ENCODE measurements at regions of chr2 and their contacts with region 1.

Region 1: GRCh38 chr2:30711646-30712085 is 95.6 kb downstream of the CAPN13 start:
- DNase-seq: peak in 3 of 4 donors; percentile 57 to 87 (median 84)
- ATAC-seq: peak; percentile 93
- H3K4me3 ChIP-seq: no peak overlapping the region
- H3K27ac ChIP-seq: peak overlapping the region in 1 of 2 donors; percentile 67
- H3K4me1 ChIP-seq: peaks cover 3 to 28% of the 10 kb centered on the region in 2 donors
- H3K27me3 ChIP-seq: no peaks in the 10 kb centered on the region
- CTCF ChIP-seq: peak; percentile 97 to 99

Region 2: DNA sequence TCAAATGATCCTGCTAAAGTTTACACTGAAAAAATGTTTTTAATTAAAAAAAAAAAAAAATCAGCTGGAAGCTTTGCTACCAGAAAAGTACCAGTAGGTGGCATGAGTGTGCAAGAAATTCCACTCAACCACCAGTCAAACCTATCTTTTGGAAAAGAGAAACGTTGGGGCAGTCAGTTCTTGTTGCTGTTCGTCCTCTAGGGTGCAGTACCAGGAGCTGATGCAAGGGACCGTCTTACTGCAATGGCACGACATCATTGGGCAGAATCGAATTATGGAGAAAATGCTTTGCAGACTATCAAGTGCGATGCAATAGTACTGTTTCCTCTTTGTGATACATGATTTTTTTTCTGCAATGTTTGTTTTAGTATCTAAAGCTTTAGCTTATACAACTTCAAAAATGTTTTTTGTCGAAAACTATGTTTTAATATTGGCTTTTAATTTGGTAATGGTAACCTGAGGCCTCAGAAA is 546.6 kb before region 1 on chr2:
- intact Hi-C with region 1: loop called in 1 of 2 experiments (anchors 5 kb)
- DNase-seq: peak in 2 of 4 donors; percentile 61 to 82
- ATAC-seq: peak; percentile 98
- H3K4me3 ChIP-seq: no peak overlapping the region
- H3K27ac ChIP-seq: no peak overlapping the region
- H3K4me1 ChIP-seq: peaks cover 0 to 9% of the 10 kb centered on the region in 2 donors
- H3K27me3 ChIP-seq: no peaks in the 10 kb centered on the region
- CTCF ChIP-seq: peak; percentile 82 to 89

Region 3: GRCh38 chr2:30208452-30208851 is 503.2 kb before region 1 on chr2:
- intact Hi-C with region 1: loop called (anchors 5 to 10 kb)
- DNase-seq: peak in 2 of 4 donors; percentile 53 to 79
- ATAC-seq: peak; percentile 93
- H3K4me3 ChIP-seq: no peak overlapping the region
- H3K27ac ChIP-seq: no peak overlapping the region
- H3K4me1 ChIP-seq: peaks cover 4 to 14% of the 10 kb centered on the region in 2 donors
- H3K27me3 ChIP-seq: no peaks in the 10 kb centered on the region
- CTCF ChIP-seq: peak; percentile 83 to 92

Region 4: DNA sequence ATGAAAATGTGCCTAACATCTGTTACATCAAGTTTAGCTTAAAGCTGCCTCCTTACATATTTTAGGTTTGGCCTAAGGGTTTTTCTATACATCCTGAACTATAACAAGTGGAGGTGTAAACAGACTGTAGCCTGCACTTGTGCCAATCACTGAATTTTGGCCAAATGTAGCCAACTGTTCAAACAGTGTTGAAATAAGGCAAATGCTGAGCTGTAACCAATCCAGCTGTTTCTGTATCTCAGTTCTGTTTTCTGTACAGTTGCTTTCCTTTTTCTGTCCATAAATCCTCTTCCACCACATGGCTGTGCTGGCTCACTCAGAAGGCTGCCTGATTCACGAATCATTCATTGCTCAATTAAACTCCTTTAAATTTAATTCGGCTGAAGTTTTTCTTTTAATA is 114.8 kb after region 1 on chr2:
- intact Hi-C with region 1: no loop called
- DNase-seq: no peak
- ATAC-seq: no peak
- H3K4me3 ChIP-seq: no peak overlapping the region
- H3K27ac ChIP-seq: no peak overlapping the region
- H3K4me1 ChIP-seq: no peaks in the 10 kb centered on the region
- H3K27me3 ChIP-seq: no peaks in the 10 kb centered on the region
- CTCF ChIP-seq: no peak

Region 5: DNA sequence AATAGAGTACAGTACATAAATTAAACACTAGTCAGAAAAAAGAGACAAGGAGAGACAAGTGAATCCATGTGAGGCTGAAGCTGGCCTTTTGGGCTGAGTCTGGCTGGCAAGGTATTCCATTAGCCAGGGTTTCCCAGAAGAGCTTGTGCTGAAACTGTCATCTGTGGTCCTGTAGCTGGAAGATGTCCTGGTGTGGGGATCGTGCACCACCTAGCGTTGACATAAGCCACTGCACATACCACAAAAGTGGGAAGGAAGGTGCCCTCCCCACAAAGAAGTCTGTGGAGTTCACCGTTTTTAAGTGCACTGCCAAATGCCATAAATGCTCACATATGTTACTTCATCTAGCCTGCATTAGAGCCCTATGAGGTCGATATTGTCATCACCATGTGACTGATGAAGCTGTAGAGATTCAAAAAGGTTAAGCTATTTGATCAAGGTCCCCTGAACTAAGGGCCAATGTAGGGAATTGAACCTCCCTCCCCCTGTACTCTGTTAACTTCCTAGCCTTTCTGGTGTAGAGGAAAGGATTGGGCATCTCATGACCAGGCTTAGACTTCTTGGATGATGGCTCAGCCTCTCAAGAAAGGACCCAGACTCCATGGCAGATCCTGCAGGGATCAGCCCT is 458.5 kb after region 1 on chr2:
- intact Hi-C with region 1: loop called in 1 of 2 experiments (anchors 10 kb)
- DNase-seq: peak in 3 of 4 donors; percentile 50 to 66 (median 51)
- ATAC-seq: peak; percentile 98
- H3K4me3 ChIP-seq: no peak overlapping the region
- H3K27ac ChIP-seq: no peak overlapping the region
- H3K4me1 ChIP-seq: no peaks in the 10 kb centered on the region
- H3K27me3 ChIP-seq: no peaks in the 10 kb centered on the region
- CTCF ChIP-seq: peak; percentile 88 to 92

Region 6: DNA sequence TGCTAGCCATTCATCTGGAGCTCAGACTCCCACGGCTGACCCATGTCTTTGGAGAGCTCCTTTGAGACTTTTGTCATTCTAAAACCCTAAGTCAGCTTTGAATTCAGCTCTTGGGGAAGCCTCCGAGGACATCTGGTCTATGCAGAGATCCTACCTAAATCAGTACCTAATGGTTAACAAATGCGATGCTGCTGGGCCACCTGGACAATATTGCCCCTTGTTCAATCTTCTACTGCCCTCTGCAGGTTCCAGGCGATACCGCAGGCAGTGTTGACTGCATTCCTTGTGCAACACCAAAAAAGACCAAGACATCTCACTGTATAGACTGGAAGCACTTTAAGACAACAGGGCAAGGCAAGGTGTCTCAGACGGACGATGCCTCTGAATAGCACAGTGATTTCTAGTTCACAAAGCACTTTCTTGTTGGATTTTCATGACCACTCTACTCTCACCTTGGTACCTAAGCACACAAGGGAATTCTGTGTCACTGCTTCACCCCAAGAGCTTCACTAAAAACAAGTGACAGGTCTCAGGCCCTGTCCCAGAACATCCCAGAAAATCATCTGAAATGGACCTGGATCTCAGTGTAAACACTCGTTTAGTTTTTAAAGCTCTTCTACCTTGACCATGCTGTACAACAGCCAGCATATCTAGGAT is 622.0 kb after region 1 on chr2:
- intact Hi-C with region 1: loop called in 1 of 2 experiments (anchors 5 kb)
- DNase-seq: peak in 3 of 4 donors; percentile 53 to 75 (median 73)
- ATAC-seq: peak; percentile 97
- H3K4me3 ChIP-seq: no peak overlapping the region
- H3K27ac ChIP-seq: no peak overlapping the region
- H3K4me1 ChIP-seq: no peaks in the 10 kb centered on the region
- H3K27me3 ChIP-seq: no peaks in the 10 kb centered on the region
- CTCF ChIP-seq: peak; percentile 95

Measured in left lung (tissue), 14 donors.